Dorsolateral prefrontal cortex (tissue), 120 donors: ENCODE measurements at regions of chr12 and their contacts with region 1.

Region 1: GRCh38 chr12:6735448-6736191 is 11.8 kb downstream of the COPS7A start:
- DNase-seq: peak; percentile 59 to 85 (median 76)
- H3K4me3 ChIP-seq: no peak overlapping the region
- H3K27ac ChIP-seq: peak overlapping the region in 21 of 59 donors; percentile 2 to 62 (median 22)
- H3K27me3 ChIP-seq: no peaks in the 10 kb centered on the region
- CTCF ChIP-seq: peak; percentile 46 to 85 (median 74)

Region 2: GRCh38 chr12:6603095-6603567 is 132.5 kb before region 1 on chr12:
- intact Hi-C with region 1: no loop called
- DNase-seq: peak in 3 of 10 donors; percentile 31 to 52 (median 40)
- H3K4me3 ChIP-seq: peak overlapping the region in 34 of 59 donors; percentile 7 to 99 (median 92)
- H3K27ac ChIP-seq: peak overlapping the region in 52 of 59 donors; percentile 18 to 100 (median 58)
- H3K27me3 ChIP-seq: no peaks in the 10 kb centered on the region
- CTCF ChIP-seq: no peak

Region 3: DNA sequence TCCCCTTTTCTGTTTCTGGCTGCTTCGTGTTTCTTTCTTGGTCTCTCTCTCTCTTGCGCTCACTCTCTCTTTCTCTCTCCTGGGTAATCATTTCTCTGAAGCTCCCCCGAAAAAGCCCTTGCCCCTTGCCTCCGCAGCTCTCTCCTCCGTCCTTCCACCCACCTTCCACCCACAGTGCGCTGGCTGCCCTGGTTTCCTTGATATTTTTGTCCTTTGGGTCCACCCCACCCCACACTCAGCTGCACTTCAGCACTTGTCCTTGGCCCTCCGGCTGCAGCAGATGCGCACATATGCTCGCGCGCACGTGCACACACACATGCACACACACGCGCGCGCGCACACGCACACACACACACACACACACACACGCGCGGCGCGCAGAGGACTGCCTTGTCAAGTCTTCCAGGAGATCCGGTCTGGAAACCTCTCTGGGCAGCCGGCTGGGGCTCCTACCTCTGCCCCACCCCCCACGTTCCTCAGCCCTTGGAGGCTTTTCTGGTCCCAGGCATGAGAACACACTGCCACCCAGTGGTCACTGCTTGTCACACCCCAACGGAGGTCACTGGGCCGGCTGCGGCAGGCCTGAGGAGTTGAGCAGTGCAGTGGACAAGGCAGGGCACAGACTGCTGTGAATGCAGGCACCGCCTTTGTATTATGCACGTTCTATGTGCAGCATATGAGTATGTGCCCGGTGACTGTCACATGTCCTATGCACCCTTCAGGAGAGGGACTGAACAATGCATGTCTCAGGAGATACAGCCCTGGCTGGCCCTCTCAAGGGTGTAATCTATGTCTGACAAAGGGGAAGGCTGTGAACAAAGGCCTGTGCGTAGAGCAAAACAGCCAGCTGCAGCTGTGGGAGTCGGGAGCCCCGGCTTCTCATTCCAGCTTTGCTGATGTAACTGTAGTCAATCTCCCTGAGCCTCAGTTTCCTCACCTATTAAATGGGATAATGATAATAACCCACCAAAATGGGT is 43.2 kb after region 1 on chr12:
- intact Hi-C with region 1: loop called in 1 of 2 experiments (anchors 5 kb)
- DNase-seq: peak; percentile 87 to 96 (median 92)
- H3K4me3 ChIP-seq: peak overlapping the region; percentile 6 to 72 (median 55)
- H3K27ac ChIP-seq: peak overlapping the region in 57 of 59 donors; percentile 11 to 90 (median 78)
- H3K27me3 ChIP-seq: peaks cover 0 to 12% (median 0%) of the 10 kb centered on the region in 45 donors
- CTCF ChIP-seq: peak; percentile 90 to 99 (median 98)

Region 4: DNA sequence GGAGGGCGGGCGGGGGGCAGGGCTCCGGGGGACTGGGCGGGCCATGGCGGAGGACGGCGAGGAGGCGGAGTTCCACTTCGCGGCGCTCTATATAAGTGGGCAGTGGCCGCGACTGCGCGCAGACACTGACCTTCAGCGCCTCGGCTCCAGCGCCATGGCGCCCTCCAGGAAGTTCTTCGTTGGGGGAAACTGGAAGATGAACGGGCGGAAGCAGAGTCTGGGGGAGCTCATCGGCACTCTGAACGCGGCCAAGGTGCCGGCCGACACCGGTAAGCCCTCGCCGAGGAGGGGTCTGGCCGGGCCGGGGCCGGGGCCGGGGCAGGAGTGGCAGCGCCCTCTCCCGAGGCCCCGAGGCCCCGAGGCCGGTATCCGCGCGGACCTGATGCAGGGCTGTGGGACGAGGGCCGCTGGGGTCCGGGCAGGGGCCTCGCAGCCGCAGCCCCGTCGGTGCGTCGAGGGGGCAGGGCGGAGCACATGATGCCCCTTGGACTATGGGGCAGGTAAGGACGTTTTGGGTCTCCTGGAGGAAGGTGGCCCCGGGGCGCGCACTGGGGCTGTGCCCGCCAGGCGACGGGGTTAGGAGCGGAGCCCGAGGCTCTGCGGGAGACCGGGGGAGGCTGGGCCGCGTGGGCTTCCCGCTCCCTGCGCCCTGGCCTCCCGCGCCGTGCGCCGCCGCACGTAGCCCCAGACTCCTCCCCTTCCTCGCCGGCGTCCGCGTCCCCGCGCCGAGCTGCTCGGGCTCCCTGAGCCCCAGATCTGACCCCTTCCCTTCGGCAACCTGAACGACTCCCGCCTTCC is 132.0 kb after region 1 on chr12 and contains the start of gene TPI1:
- intact Hi-C with region 1: no loop called
- DNase-seq: peak; percentile 74 to 92 (median 90)
- H3K4me3 ChIP-seq: peak within 1 kb of the TSS; percentile 53 to 100 (median 97)
- H3K27ac ChIP-seq: peak within 1 kb of the TSS; percentile 74 to 100 (median 98)
- H3K27me3 ChIP-seq: no peaks in the 10 kb centered on the region
- CTCF ChIP-seq: peak in 37 of 56 donors; percentile 4 to 58 (median 26)
- total RNA-seq, gene TPI1: 261 to 851 (median 575) TPM